Mammary epithelial cell (primary cell): ENCODE measurements at regions of chr10 and their contacts with region 1.

Region 1: GRCh38 chr10:119028900-119029612 is 458 bp upstream of the NANOS1 start:
- DNase-seq: peak; percentile 73
- H3K4me3 ChIP-seq: peak overlapping the region; percentile 24 to 71 (median 32)
- H3K27ac ChIP-seq: no peak overlapping the region
- H3K4me1 ChIP-seq: peaks cover 32% of the 10 kb centered on the region
- H3K27me3 ChIP-seq: no peaks in the 10 kb centered on the region
- CTCF ChIP-seq: peak; percentile 1 to 29

Region 2: GRCh38 chr10:118742782-118743181 is 286.3 kb before region 1 on chr10:
- CTCF ChIA-PET with region 1: no interaction called
- dilution Hi-C with region 1: no loop called
- in situ Hi-C with region 1: no loop called
- intact Hi-C with region 1: loop called (anchors 10 kb)
- DNase-seq: no peak
- H3K4me3 ChIP-seq: no peak overlapping the region
- H3K27ac ChIP-seq: peak overlapping the region; percentile 41
- H3K4me1 ChIP-seq: peaks cover 42% of the 10 kb centered on the region
- H3K27me3 ChIP-seq: no peaks in the 10 kb centered on the region
- CTCF ChIP-seq: no peak

Region 3: DNA sequence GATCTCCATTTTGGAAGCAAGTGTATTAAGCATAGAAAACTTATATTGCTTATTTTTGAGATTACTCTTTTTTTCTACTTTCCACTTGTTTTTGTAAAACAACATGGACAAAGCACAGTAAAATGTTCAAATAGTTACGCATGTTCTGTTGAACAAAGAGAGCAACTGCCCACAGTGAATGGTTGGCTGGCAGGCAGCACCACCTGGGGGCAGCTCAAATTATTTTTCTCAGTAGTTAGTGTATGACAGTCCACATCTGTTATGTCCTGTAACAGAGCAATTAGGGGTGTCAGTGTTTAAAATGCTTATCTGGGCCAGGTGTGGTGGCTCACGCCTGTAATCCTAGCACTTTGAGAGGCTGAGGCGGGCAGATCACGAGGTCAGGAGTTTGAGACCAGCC is 228.1 kb before region 1 on chr10:
- CTCF ChIA-PET with region 1: no interaction called
- dilution Hi-C with region 1: no loop called
- in situ Hi-C with region 1: no loop called
- intact Hi-C with region 1: loop called (anchors 2 kb)
- DNase-seq: peak; percentile 26
- H3K4me3 ChIP-seq: no peak overlapping the region
- H3K27ac ChIP-seq: no peak overlapping the region
- H3K4me1 ChIP-seq: peaks cover 20% of the 10 kb centered on the region
- H3K27me3 ChIP-seq: no peaks in the 10 kb centered on the region
- CTCF ChIP-seq: peak; percentile 51 to 68

Region 4: GRCh38 chr10:118870467-118871243 is 158.4 kb before region 1 on chr10:
- CTCF ChIA-PET with region 1: no interaction called
- dilution Hi-C with region 1: no loop called
- in situ Hi-C with region 1: no loop called
- intact Hi-C with region 1: loop called (anchors 5 kb)
- DNase-seq: peak; percentile 91
- H3K4me3 ChIP-seq: peak overlapping the region in 1 of 3 experiments; percentile 17
- H3K27ac ChIP-seq: peak overlapping the region; percentile 75
- H3K4me1 ChIP-seq: peaks cover 45% of the 10 kb centered on the region
- H3K27me3 ChIP-seq: no peaks in the 10 kb centered on the region
- CTCF ChIP-seq: no peak

Region 5: GRCh38 chr10:118958984-118959916 is 69.8 kb before region 1 on chr10:
- CTCF ChIA-PET with region 1: no interaction called
- dilution Hi-C with region 1: no loop called
- in situ Hi-C with region 1: no loop called
- intact Hi-C with region 1: loop called (anchors 5 kb)
- DNase-seq: peak; percentile 57
- H3K4me3 ChIP-seq: no peak overlapping the region
- H3K27ac ChIP-seq: no peak overlapping the region
- H3K4me1 ChIP-seq: peaks cover 33% of the 10 kb centered on the region
- H3K27me3 ChIP-seq: no peaks in the 10 kb centered on the region
- CTCF ChIP-seq: no peak